Activated naive CD8-positive, alpha-beta T cell treated with anti-CD3 and anti-CD28 coated beads, Interleukin-2, amount 10 ng/mL, durations not matched to agents 7 days and 5 days (primary cell): ENCODE measurements at regions of chr6 and their contacts with region 1.

Region 1: GRCh38 chr6:41334482-41335040 is 847 bp upstream of the NCR2 start:
- DNase-seq: peak; percentile 43
- ATAC-seq: no peak
- H3K4me3 Mint-ChIP-seq: peak overlapping the region; percentile 61
- H3K27ac Mint-ChIP-seq: peak overlapping the region; percentile 97
- H3K4me1 Mint-ChIP-seq: peaks cover 56% of the 10 kb centered on the region
- H3K27me3 Mint-ChIP-seq: no peaks in the 10 kb centered on the region

Region 2: DNA sequence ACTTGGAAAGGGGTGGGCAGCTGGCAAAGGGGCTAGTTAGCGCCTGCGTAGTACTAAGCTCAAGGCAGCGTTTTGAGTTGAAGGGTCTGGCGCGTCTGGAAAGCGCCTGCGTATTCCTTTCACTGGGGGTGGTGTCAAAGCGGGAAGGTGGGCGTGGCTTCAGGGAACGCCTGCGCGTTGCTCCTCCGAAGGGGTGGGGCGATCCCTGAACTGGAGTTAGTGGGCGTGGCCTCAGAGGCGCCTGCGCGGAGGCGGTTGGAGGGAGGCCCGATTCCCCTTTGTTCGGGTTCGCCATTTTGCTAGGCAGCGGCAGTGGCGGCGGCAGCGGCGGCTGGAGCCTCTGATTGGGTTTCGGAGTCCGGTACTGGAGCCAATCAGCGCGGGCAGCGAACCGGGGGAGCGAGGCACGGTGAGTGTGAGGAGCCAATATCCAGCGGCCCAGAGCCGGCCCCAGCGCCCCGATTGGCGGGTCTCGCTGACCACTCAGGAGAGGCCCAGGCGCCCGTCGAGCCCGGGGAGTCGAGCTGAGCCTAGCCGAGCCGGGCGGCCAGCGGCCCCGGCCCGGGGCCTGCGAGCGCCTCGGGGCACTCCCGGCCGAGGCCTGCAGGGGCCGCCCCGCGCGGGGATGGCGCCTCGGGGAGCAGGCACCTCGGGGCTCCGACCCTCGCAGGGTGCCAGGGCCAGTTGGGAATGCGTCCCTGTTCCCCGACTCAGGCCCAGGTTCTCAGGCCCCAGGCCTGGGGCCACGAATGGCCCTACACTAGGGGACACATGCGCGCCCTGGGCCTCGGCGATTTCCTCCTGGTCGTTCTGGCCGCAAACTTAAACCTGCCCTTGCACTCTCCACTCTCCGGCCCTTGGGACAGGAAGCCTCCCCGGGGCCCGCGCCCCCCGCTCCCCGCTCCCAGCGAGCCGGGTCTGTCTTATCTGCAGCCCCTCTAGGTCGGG is 261.6 kb before region 1 on chr6 and contains the start of gene NFYA:
- POLR2A ChIA-PET with region 1: interaction called, 10 read pairs
- DNase-seq: peak; percentile 100
- ATAC-seq: peak; percentile 77
- H3K4me3 Mint-ChIP-seq: peak within 1 kb of the TSS; percentile 97
- H3K27ac Mint-ChIP-seq: peak within 1 kb of the TSS; percentile 99
- H3K4me1 Mint-ChIP-seq: peaks cover 43% of the 10 kb centered on the region
- H3K27me3 Mint-ChIP-seq: no peaks in the 10 kb centered on the region
- total RNA-seq, gene NFYA: 44.4 to 47.7 TPM

Region 3: GRCh38 chr6:41318654-41319565 is 15.7 kb before region 1 on chr6:
- POLR2A ChIA-PET with region 1: interaction called, 37 read pairs
- DNase-seq: peak; percentile 90
- ATAC-seq: peak; percentile 97
- H3K4me3 Mint-ChIP-seq: peak overlapping the region; percentile 60
- H3K27ac Mint-ChIP-seq: peak overlapping the region; percentile 80
- H3K4me1 Mint-ChIP-seq: peaks cover 19% of the 10 kb centered on the region
- H3K27me3 Mint-ChIP-seq: peaks cover 28% of the 10 kb centered on the region

Region 4: GRCh38 chr6:41344876-41345275 is 10.3 kb after region 1 on chr6:
- POLR2A ChIA-PET with region 1: interaction called, 91 read pairs
- DNase-seq: peak; percentile 61
- ATAC-seq: peak; percentile 99
- H3K4me3 Mint-ChIP-seq: peak overlapping the region; percentile 78
- H3K27ac Mint-ChIP-seq: peak overlapping the region; percentile 98
- H3K4me1 Mint-ChIP-seq: peaks cover 62% of the 10 kb centered on the region
- H3K27me3 Mint-ChIP-seq: no peaks in the 10 kb centered on the region

Region 5: GRCh38 chr6:41735427-41736356 is 401.1 kb after region 1 on chr6 and contains the start of gene TFEB:
- POLR2A ChIA-PET with region 1: interaction called, 12 read pairs
- DNase-seq: peak; percentile 98
- ATAC-seq: peak; percentile 60
- H3K4me3 Mint-ChIP-seq: peak within 1 kb of the TSS; percentile 78
- H3K27ac Mint-ChIP-seq: peak within 1 kb of the TSS; percentile 75
- H3K4me1 Mint-ChIP-seq: peaks cover 24% of the 10 kb centered on the region
- H3K27me3 Mint-ChIP-seq: no peaks in the 10 kb centered on the region
- total RNA-seq, gene TFEB: 17.6 TPM